ENCODE measurements at regions of chr1 and their contacts with region 1.

Region 1: DNA sequence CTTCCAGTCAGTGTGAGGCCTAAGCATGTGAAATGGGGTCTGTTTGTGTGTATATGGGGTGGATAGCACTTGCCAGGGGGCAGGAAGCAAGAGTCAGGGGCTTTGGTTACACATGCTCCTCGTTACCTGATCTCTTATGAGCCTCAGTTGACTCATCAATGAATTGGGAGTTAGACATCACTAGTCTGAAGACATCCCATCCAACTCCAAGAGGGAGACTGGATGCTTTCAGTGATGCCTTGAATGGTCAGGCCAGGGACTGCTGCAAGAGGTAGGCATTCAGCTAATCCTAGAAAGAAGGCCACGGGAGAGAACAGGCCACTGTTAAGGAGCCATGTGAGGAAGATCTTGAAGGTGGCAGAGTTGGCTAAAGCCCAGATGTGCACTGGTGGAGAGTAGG is 6.3 kb downstream of the RAB25 start:
- DNase-seq: no peak
- ATAC-seq: no peak
- H3K4me3 ChIP-seq: no peak overlapping the region
- H3K27ac ChIP-seq: no peak overlapping the region
- H3K4me1 ChIP-seq: no peaks in the 10 kb centered on the region
- H3K27me3 ChIP-seq: no peaks in the 10 kb centered on the region
- CTCF ChIP-seq: no peak
- EP300 ChIP-seq: no peak
- POLR2A ChIP-seq: no peak
- RAD21 ChIP-seq: no peak

Region 2: DNA sequence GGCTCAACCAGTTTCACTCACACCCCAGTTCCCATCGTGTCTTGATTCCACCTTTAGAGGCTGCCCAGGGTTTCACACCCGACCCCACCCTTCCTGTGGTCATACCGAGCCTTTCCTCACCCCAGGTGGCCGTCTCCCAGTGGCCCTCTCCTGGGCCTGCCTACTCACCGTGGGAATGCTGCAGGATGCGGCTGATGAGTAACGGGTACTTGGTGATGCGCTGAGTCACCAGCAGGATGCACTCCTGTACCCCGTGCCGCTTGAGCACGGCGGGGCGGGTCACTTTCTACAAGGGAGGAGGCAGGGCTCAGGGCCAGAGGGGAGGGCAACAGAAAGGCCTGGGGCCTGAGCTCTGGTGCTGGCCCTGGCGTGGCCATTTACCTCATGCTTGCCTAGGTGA is 105.3 kb before region 1 on chr1:
- CTCF ChIA-PET with region 1: interaction called, 10 read pairs
- POLR2A ChIA-PET with region 1: no interaction called
- RAD21 ChIA-PET with region 1: interaction called, 3 read pairs
- SMC1A ChIA-PET with region 1: interaction called, 3 read pairs
- in situ Hi-C with region 1: no loop called
- intact Hi-C with region 1: no loop called
- DNase-seq: no peak
- ATAC-seq: 0 out of 3 replicates have a peak, but pooled peaks have one; percentile 5
- H3K4me3 ChIP-seq: no peak overlapping the region
- H3K27ac ChIP-seq: no peak overlapping the region; the same call in 1 of the 2 replicates
- H3K4me1 ChIP-seq: peaks cover 39% of the 10 kb centered on the region
- H3K27me3 ChIP-seq: no peaks in the 10 kb centered on the region
- CTCF ChIP-seq: peak in 1 of 3 experiments; percentile 9; a peak in 1 of 6 replicates
- EP300 ChIP-seq: no peak
- POLR2A ChIP-seq: peak; percentile 57; the same call in 1 of the 2 replicates
- RAD21 ChIP-seq: peak; percentile 39